Left cardiac atrium (tissue), 4 donors: ENCODE measurements at regions of chr10 and their contacts with region 1.

Region 1: DNA sequence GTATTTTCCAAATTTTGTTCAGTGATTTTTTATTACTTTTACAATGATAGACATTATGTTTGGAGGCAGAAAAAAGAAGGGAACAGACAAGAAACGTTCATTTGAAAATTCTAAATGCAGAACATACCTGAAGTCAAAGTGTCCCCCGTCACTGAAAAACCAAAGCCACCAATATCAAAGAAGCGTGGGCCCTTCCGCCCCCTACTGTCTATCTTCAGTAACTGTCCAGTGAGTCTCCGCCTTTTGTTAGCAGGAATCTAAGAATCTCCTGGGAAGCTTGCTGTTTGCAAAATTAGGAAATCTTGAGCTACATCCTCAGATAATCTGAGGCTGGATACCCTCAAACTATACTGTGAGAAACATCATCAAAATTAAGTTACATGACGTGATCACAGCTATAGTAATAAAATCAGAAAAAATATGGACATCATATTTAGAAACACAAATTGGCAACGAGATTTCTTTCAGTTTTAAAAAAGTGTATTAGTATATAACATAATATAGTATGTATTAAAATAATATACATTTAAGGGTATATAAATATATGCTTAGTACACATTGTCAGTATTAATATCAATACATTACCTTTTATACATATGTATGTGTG is 169.3 kb upstream of the AKR1E2 start:
- DNase-seq: peak; percentile 50
- ATAC-seq: peak; percentile 37 to 79

Region 2: DNA sequence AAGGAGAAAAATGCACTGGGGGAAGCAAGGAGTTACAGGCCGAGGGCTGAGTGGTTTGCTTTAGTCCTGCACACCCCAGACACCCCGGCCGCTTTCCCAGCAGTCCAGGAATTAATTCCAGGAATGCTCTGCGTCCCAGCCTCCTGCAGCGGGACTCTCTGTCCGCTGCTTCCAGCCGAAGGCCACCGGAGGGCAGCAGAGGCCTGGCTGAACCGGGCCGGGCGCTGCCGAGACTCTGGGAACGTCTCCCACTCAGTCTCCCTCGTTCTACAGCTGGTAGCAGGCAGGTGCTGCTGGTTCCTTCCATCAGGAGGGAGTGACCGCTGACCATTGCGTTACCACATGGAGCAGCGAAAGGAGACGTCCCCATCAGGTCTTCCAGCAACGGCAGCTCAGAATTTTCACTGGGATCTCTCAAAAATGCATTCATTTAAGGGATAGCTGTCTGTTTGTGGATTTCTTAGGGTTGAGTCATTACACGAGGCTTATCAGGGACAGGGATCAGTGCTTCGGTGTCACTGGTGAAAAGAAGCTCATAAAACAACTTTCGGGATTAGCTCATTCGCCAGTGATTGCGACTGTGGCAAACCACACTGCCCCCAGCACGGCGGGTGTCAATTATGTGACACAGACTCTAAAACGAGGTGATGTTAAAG is 1459.2 kb before region 1 on chr10:
- intact Hi-C with region 1: loop called in 1 of 2 experiments (anchors 5 kb)
- DNase-seq: peak; percentile 79
- ATAC-seq: peak; percentile 94 to 96

Region 3: GRCh38 chr10:3911713-3912442 is 744.8 kb before region 1 on chr10:
- intact Hi-C with region 1: loop called in 1 of 2 experiments (anchors 10 kb)
- DNase-seq: no peak
- ATAC-seq: peak; percentile 73 to 83

Region 4: GRCh38 chr10:4241724-4242345 is 414.8 kb before region 1 on chr10:
- intact Hi-C with region 1: loop called in 1 of 2 experiments (anchors 10 kb)
- DNase-seq: peak; percentile 40
- ATAC-seq: peak; percentile 88 to 91

Region 5: DNA sequence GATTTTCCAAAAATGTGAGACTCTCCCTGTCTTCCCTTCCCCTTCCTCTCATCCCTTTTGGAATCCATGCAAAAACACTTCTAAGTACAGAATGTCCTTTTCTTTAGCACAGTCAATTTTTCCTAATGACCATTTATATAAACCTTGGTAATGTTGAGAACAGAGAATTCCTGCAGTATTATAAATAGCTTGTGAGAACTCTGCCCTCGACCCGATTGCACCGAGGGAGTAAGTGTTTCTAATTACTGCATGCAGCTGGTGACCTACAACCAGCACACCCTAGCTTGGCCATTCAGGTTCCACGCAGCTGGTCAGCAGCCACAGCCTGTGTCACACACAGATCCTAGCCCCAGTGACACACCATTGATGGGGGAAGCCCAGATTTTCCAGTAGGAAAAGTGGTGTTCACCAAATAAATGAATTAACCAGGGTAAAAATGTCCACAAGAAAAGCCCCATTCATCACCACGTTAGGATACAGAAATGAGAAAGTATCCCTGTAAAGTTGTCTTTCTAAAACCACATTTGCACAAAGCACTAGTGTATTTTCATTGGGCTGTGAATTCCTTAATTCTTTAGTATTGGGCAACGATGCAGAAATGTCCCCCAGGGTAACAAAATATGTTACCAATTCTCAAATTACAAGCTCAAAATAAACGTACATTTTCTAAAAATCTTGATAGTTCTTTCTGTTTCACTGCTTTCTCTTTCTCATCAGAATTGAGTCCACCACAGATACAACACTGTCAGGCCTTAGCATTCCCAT is 372.7 kb before region 1 on chr10:
- intact Hi-C with region 1: no loop called
- DNase-seq: peak; percentile 48
- ATAC-seq: peak; percentile 87 to 89

Region 6: DNA sequence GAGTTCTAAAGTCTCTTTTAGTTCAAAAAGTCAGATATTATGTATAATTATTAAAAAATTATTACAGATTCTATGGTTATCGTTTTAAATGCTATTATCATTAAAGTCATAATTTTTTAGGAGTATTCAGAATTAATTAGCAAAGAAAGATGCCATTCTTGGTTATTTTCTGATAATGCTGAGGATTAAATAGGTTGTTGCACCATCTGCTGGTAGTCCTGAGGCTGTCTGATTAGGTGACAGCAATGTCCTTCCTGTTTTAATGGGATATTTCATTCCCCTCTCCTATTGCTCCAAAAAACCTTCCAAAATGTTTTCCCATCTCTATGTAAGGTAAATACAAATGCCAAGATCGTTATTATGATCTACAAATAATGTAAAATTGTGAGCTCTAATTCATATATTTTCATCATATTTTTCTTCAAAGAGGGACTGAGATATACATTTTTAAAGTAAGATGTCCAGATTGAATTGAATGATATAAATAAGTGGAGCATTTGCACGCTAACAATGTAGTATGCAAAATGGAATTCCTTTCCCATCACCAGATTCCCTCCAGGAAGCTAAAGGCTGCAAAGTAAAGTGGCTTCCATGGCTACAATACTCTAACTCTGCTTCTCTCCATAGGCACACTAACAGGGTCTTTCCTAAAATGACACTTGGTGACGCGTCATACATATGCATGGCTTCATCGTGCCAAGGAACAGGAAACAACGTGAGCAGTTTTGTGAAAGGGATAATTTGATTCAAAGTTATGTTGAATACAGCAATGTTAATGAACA is 110.5 kb after region 1 on chr10:
- intact Hi-C with region 1: loop called in 1 of 2 experiments (anchors 10 kb)
- DNase-seq: no peak
- ATAC-seq: peak; percentile 57 to 62